IMR-90 (cell line): ENCODE measurements at regions of chr11 and their contacts with region 1.

Region 1: GRCh38 chr11:92152245-92152644 is 72.4 kb upstream of the FAT3 start:
- DNase-seq: no peak
- ATAC-seq: no peak
- H3K4me3 ChIP-seq: no peak overlapping the region
- H3K27ac ChIP-seq: no peak overlapping the region
- H3K4me1 ChIP-seq: no peaks in the 10 kb centered on the region
- H3K27me3 ChIP-seq: no peaks in the 10 kb centered on the region
- CTCF ChIP-seq: no peak
- POLR2A ChIP-seq: no peak
- RAD21 ChIP-seq: no peak

Region 2: GRCh38 chr11:92035488-92035887 is 116.8 kb before region 1 on chr11:
- CTCF ChIA-PET with region 1: no interaction called
- POLR2A ChIA-PET with region 1: no interaction called
- dilution Hi-C with region 1: no loop called
- in situ Hi-C with region 1: no loop called
- intact Hi-C with region 1: no loop called
- DNase-seq: no peak
- ATAC-seq: no peak
- H3K4me3 ChIP-seq: no peak overlapping the region
- H3K27ac ChIP-seq: no peak overlapping the region
- H3K4me1 ChIP-seq: no peaks in the 10 kb centered on the region
- H3K27me3 ChIP-seq: no peaks in the 10 kb centered on the region
- CTCF ChIP-seq: no peak
- POLR2A ChIP-seq: no peak
- RAD21 ChIP-seq: no peak

Region 3: GRCh38 chr11:92552942-92553341 is 400.7 kb after region 1 on chr11:
- CTCF ChIA-PET with region 1: no interaction called
- POLR2A ChIA-PET with region 1: no interaction called
- dilution Hi-C with region 1: no loop called
- in situ Hi-C with region 1: no loop called
- intact Hi-C with region 1: loop called (anchors 2 kb)
- DNase-seq: peak; percentile 4
- ATAC-seq: no peak
- H3K4me3 ChIP-seq: no peak overlapping the region
- H3K27ac ChIP-seq: no peak overlapping the region
- H3K4me1 ChIP-seq: no peaks in the 10 kb centered on the region
- H3K27me3 ChIP-seq: no peaks in the 10 kb centered on the region
- CTCF ChIP-seq: peak; percentile 46
- POLR2A ChIP-seq: no peak
- RAD21 ChIP-seq: peak; percentile 55